Left cardiac atrium (tissue), 4 donors: ENCODE measurements at regions of chr3 and their contacts with region 1.

Region 1: DNA sequence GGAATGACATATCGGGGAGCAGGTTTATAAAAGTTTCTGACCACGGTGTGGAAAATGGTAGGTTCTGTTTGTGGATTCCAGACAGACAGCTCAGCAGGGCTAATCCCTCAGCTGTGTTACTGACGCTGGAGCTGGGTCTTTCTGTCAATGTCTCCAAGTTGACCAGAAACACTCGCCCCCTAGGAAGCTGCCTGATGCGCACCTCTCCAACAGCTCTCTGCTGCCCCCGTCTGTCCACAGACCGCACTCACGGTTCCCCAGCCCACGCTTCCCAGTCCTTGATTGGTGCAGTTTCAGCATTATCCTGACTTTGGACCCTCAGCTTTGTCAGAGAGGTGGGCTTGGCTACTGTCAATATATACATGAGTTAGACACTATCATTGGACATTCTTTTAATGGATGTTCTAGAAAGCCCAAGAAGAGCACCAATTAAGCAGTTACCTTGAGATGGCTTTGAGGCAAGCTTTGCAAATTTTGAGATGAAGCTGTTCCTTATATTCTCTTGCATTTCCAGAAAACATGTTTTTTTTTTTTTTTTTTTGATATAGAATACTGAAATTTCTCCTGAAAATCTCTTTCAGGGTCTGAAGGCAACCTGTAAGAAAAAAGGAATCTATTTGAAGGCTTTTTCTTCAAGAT is 98.9 kb upstream of the TBC1D5 start:
- DNase-seq: peak; percentile 75
- ATAC-seq: peak; percentile 84 to 91

Region 2: DNA sequence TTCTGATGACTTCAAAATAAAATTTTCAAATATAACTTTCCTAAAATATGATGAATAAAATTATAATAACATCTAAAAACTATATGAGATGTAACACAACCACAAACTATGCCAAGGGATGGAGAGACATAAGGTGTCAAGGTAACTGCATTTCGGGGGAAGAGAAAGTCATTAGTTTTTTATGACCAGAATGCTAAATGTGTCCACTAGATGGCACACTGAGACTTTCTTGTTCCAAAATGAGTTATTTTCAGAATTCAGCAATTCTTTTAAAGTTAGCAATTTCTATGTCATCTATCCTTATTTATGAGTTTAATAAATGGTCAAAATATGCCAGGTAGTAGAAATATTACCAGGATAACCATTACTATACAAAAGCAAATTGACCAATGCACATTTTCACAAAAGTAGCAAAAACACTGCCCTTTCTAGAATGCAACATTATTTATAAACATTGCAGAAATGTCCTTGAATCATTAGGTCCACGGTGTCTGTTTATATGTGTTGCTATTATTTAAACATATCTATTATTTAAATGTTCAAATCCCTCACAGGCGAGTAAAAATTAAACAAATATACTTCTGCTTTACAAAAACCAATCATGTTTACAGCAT is 582.4 kb before region 1 on chr3:
- intact Hi-C with region 1: loop called in 1 of 2 experiments (anchors 5 kb)
- DNase-seq: no peak
- ATAC-seq: no peak

Region 3: DNA sequence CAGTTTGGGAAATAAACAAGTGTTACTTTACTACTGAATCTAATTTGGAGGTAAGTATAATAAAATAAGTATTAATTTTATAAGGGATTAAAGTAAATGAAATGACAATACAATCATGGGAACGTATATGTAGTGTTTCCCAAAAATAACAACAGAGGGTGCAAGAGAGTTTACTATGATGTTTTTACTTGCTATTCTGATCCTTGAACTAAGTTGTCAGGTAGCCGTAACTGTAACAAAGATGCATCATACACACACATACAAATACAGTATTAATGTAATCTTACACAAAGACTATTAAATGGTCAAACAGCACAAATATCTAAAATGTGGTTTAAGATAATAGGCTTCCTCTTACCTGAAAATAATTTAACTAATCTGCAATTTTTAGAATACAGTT is 410.3 kb before region 1 on chr3:
- intact Hi-C with region 1: loop called (anchors 2 to 10 kb)
- DNase-seq: no peak
- ATAC-seq: peak in 1 of 2 donors; percentile 58

Region 4: DNA sequence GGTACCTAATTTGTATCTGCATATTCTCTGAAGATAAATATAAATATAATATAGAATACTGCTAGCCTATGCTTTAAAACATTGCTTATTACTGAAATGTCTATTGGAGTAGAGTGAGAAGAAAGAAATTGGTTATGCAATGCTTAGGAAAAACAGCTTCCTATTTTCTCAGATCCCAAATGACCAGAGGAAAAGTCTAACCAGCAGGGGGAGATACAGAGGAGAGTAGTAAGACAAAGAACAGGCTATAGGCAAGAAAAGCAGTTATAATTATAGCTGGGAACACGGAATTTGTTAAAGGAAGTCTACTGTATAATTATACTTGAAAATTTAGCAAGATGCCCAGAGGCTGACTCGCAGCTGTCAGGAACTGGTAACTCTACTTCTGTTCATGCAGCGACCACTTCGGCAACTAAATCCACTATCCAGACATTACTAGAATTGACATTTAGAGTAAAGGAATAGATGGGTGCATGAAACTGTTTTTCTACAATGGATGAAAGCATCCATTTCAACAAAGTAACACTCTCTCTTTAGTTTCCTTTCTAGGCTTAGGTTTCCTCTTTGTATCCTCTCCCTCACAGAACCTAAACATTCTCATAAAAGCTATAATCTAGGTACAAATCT is 196.1 kb before region 1 on chr3:
- intact Hi-C with region 1: loop called (anchors 5 to 10 kb)
- DNase-seq: no peak
- ATAC-seq: peak; percentile 49 to 71

Region 5: GRCh38 chr3:18046131-18046915 is 205.0 kb after region 1 on chr3:
- intact Hi-C with region 1: no loop called
- DNase-seq: no peak
- ATAC-seq: no peak